Activated CD8-positive, alpha-beta T cell treated with anti-CD3 and anti-CD28 coated beads for 36 hours (primary cell): ENCODE measurements at regions of chr14 and their contacts with region 1.

Region 1: DNA sequence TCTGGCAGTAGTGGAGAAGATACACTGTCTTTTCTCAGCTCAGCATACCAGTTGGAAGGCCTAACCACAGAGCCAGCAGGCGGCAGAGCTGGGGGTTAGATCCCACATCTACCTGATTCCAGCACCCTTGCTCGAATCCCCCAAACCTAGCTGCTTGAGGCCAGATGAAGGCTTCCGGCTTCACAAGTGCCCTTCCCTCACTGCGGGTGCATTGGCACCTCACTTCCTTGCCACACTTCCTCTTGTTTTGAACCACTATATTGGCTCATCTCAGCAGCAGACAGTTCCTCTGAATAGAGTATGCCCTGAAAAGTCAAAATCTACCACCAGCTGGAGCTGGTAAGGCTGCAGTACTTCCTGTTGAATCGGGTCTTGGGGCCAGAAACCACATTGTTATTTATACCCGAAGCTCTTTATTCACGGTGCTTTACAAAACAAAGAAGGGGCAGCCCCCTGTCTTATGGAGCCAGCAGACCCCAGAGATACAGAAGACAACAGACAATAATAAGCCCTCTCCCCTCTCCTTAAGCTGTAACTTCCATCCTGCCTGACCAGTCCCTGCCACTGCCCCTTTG is 233.7 kb downstream of the EFCAB11 start:
- DNase-seq: peak; percentile 86
- ATAC-seq: peak; percentile 82
- H3K4me3 Mint-ChIP-seq: peak overlapping the region; percentile 52
- H3K27ac Mint-ChIP-seq: peak overlapping the region; percentile 100
- H3K4me1 Mint-ChIP-seq: peaks cover 80% of the 10 kb centered on the region
- H3K27me3 Mint-ChIP-seq: no peaks in the 10 kb centered on the region
- CTCF ChIP-seq: no peak

Region 2: GRCh38 chr14:89641495-89642175 is 79.2 kb before region 1 on chr14:
- CTCF ChIA-PET with region 1: interaction called, 8 read pairs
- POLR2A ChIA-PET with region 1: interaction called, 15 read pairs
- intact Hi-C with region 1: no loop called
- DNase-seq: peak; percentile 59
- ATAC-seq: peak; percentile 91
- H3K4me3 Mint-ChIP-seq: peak overlapping the region; percentile 60
- H3K27ac Mint-ChIP-seq: peak overlapping the region; percentile 96
- H3K4me1 Mint-ChIP-seq: peaks cover 68% of the 10 kb centered on the region
- H3K27me3 Mint-ChIP-seq: no peaks in the 10 kb centered on the region
- CTCF ChIP-seq: no peak

Region 3: DNA sequence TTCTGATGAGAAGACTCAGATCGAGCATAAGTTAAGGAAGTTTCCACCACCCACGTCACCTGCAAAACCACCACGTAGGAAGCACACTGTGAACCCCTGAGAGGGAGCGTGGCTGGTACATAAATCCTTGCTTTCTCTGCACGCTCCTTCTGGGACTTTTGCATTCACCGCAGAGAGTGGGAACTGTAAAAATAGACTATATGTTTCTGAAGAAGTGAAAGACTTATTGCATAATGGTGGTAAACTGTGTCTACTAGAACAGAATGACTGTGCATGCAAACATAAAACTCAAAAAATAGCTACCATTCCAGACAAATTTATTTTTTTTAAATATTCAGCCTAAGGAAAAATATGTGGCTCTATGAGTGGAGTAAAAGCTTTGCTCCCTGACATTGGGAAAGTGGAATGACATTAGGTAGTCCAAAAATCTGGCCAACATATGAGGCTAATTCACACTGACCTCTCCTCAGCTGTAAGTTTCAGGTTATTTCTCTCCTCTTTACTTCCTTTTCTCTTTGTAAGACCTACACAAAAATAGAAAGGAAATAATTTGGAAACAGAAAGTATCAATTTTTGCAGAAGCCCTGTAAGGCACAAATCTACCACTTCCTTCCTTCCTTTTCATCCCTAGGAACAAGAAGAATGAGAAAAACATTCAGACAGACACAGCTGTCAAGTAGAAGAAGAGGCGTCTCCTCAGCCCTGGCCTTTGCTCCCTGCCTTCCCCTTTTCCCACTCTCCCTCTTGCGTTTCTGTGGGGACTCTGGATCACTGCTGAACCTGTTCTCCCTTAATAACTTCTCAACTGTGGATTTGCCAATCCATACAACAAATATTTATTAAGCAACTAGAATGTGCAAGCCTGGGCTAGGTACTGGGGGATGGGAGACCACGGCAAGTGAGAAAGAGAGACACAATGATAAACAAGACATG is 39.5 kb before region 1 on chr14:
- CTCF ChIA-PET with region 1: no interaction called
- POLR2A ChIA-PET with region 1: interaction called, 11 read pairs
- intact Hi-C with region 1: loop called (anchors 2 kb)
- DNase-seq: peak; percentile 83
- ATAC-seq: peak; percentile 79
- H3K4me3 Mint-ChIP-seq: peak overlapping the region; percentile 63
- H3K27ac Mint-ChIP-seq: peak overlapping the region; percentile 90
- H3K4me1 Mint-ChIP-seq: peaks cover 46% of the 10 kb centered on the region
- H3K27me3 Mint-ChIP-seq: no peaks in the 10 kb centered on the region
- CTCF ChIP-seq: no peak

Region 4: DNA sequence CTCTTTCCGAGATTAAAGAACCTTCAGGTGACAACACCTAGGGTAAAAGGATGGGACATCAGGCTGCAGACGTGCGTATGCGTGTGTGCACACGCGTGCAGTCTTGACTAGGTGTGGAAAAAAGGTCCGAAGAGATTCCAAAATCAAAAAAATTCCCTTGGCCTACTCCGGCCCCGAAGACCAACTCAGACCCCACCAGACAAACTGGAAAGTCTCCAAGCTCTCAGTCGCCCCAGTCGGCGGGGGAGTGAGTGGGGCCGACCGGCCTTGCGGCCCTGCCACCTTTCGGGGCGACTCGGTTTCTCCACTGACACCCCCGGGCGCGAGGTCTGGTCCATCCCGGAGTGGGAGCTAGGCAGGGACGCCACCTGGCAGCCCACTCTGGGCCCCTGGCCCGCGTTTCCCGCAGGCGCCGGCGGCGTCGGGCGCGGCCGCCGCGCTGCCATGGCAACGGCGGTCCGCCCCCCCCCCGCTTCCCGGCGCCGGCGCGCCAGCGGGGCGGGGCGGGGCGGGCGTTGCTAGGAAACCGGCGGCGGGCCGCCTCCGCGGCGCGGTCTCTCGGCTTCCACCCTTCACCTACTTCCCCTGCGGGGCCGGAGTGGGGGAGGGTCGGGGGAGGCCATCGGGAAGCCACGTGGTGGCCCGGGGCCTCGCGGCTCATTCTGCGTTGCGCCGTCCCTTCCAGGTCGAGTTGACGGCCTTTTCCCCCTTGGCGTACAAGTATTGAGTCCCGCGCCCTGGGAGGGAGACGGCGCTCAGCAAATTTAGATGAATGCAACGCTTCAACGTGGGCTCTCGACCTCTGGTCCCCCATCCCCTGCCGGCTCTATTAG is 19.4 kb before region 1 on chr14:
- CTCF ChIA-PET with region 1: interaction called, 9 read pairs
- POLR2A ChIA-PET with region 1: interaction called, 38 read pairs
- intact Hi-C with region 1: no loop called
- DNase-seq: peak; percentile 86
- ATAC-seq: peak; percentile 85
- H3K4me3 Mint-ChIP-seq: peak overlapping the region; percentile 63
- H3K27ac Mint-ChIP-seq: peak overlapping the region; percentile 90
- H3K4me1 Mint-ChIP-seq: peaks cover 50% of the 10 kb centered on the region
- H3K27me3 Mint-ChIP-seq: no peaks in the 10 kb centered on the region
- CTCF ChIP-seq: no peak

Region 5: GRCh38 chr14:89767861-89768268 is 47.0 kb after region 1 on chr14:
- CTCF ChIA-PET with region 1: interaction called, 3 read pairs
- POLR2A ChIA-PET with region 1: interaction called, 3 read pairs
- intact Hi-C with region 1: loop called (anchors 5 kb)
- DNase-seq: peak; percentile 79
- ATAC-seq: peak; percentile 90
- H3K4me3 Mint-ChIP-seq: peak overlapping the region; percentile 50
- H3K27ac Mint-ChIP-seq: peak overlapping the region; percentile 89
- H3K4me1 Mint-ChIP-seq: peaks cover 30% of the 10 kb centered on the region
- H3K27me3 Mint-ChIP-seq: no peaks in the 10 kb centered on the region
- CTCF ChIP-seq: peak; percentile 82